Heart left ventricle (tissue), 16 donors: ENCODE measurements at regions of chr3 and their contacts with region 1.

Region 1: DNA sequence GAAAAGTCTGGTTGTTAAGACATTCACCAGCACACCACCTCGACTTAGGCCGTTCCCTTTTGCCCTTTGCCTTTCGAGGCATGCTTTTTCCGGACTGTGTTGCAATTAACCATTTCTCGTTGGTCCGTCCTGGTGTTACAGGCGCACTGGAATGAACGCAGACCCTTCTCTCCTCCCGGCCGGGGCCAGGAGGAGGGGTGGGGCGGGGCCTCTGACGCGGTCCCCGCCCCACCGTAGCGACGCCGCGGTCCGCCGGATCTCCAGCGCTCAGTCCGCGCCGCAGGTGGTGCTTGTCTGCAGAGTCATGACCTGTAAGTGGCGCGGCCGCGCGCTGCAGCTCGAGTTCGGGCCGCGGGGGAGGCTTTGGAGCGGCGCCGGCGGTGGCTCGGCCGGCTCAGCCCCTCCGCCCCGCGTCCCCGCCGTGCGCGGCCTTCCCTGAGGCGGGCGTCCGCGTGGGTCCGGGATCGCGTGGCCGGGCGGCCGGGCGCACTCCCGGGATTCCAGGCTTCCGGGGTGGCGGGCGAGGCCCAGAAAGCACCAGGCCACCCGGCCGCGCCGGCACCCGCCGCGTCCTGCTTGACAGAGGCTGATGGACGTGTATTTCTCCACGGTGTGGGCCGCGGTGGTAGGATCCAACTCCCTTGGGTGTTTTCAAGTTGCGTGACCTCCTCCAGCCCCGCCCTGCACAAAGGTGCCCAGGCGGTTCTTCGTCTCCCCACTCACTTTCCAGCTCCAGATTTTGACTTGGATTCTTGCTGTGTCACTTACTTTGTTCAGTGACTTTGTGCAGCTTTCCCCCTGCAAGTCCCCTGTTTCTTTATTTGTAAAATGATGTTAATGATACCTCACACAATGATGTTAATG is at the start of gene NIT2:
- DNase-seq: peak; percentile 87 to 93 (median 92)
- ATAC-seq: peak; percentile 80 to 98 (median 98)
- H3K4me3 ChIP-seq: peak within 1 kb of the TSS; percentile 57 to 80 (median 68)
- H3K27ac ChIP-seq: peak within 1 kb of the TSS; percentile 35 to 86 (median 82)
- H3K4me1 ChIP-seq: peaks cover 0 to 20% (median 8%) of the 10 kb centered on the region in 12 donors
- H3K27me3 ChIP-seq: no peaks in the 10 kb centered on the region
- CTCF ChIP-seq: peak in 1 of 12 donors; percentile 16
- POLR2A ChIP-seq: peak in 1 of 2 donors; percentile 72
- total RNA-seq, gene NIT2: 11.6 to 50.9 (median 43.9) TPM

Region 2: DNA sequence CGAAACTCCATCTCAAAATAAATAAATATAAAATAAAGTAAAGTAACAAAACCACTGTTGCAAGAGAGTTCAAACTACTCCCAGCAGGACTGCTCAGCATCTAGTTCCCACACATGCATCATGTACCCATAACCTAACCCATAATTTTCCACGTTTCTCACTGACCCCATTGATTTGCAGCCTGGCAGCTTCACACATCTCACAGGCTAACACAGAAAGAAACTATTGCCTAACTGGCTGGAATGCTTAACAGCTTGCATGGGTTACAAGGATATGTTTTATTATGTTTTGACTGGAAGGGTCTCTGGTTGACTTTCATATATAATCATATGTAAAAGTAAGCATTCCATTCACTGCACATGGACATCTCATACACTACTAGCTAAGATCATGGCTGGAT is 129.5 kb before region 1 on chr3:
- intact Hi-C with region 1: no loop called
- DNase-seq: no peak
- ATAC-seq: no peak
- H3K4me3 ChIP-seq: no peak overlapping the region
- H3K27ac ChIP-seq: no peak overlapping the region
- H3K4me1 ChIP-seq: peaks cover 0 to 8% (median 5%) of the 10 kb centered on the region in 12 donors
- H3K27me3 ChIP-seq: no peaks in the 10 kb centered on the region
- CTCF ChIP-seq: no peak
- POLR2A ChIP-seq: no peak

Region 3: DNA sequence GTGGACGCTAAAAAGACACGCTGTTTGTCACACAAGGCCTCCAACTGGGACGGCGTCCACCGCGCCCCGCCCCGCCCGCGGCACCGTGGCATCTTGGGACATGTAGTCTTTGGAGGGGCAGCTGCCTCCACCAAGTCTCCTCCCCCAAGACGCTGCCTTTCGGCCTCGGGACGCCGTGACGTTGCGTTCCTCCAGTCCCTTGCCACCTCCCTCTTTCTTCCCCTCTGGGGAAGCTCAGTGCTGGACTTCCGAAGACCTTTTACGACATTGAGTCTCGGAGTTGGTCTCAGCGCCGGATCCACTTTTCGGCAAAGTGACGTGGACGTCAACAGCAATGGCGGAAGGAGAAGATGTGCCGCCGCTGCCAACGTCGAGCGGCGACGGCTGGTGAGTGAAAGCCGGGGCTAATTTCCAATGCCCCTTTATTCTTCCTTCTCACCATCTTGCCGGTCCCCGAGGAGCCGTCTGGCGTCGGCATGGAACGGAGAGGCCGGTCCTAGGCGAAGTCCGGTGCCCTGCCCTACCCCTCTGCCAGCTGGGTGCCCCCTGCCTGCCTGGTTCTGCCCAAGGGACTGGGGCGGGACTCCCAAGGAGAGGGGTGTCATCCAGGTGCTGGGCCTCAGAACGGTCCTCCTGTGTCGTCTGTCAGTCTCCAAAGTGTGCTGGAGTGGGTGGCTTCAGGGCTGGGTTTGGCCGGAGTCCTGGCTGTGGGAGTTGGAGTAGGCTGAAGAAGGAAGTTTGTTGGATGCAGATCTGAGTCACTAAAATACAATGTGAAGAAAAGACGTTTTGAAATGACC is 73.8 kb before region 1 on chr3 and contains the start of gene TBC1D23:
- intact Hi-C with region 1: loop called in 1 of 10 experiments (anchors 2 kb)
- DNase-seq: peak; percentile 99
- ATAC-seq: peak; percentile 99
- H3K4me3 ChIP-seq: peak within 1 kb of the TSS; percentile 66 to 97 (median 88)
- H3K27ac ChIP-seq: peak within 1 kb of the TSS; percentile 84 to 98 (median 92)
- H3K4me1 ChIP-seq: peaks cover 0 to 67% (median 40%) of the 10 kb centered on the region in 12 donors
- H3K27me3 ChIP-seq: no peaks in the 10 kb centered on the region
- CTCF ChIP-seq: peak in 1 of 12 donors; percentile 29
- POLR2A ChIP-seq: peak; percentile 24 to 83
- total RNA-seq, gene TBC1D23: 17.7 to 38.3 (median 32.9) TPM

Region 4: GRCh38 chr3:100271522-100271921 is 63.2 kb before region 1 on chr3:
- intact Hi-C with region 1: no loop called
- DNase-seq: no peak
- ATAC-seq: no peak
- H3K4me3 ChIP-seq: no peak overlapping the region
- H3K27ac ChIP-seq: no peak overlapping the region
- H3K4me1 ChIP-seq: peaks cover 0 to 43% (median 28%) of the 10 kb centered on the region in 12 donors
- H3K27me3 ChIP-seq: no peaks in the 10 kb centered on the region
- CTCF ChIP-seq: no peak
- POLR2A ChIP-seq: no peak

Region 5: DNA sequence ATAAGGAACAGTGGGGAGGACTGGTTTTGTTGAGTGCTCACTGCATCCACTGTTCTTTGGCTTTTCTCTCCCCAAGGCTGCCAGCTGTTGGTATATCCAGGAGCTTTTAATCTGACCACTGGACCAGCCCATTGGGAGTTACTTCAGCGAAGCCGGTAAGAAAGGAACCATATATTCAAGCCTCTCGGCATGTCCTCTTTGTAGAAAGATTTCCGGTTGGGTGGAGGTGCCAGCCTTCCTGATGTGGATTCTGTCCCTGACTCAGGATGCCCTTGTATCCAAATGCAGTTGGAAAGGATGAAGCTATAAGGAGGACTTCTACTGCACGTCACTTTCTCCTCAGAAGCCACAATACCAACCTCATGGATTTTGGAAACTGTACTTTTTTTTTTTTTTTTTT is 14.0 kb after region 1 on chr3:
- intact Hi-C with region 1: no loop called
- DNase-seq: no peak
- ATAC-seq: no peak
- H3K4me3 ChIP-seq: no peak overlapping the region
- H3K27ac ChIP-seq: no peak overlapping the region
- H3K4me1 ChIP-seq: peaks cover 0 to 14% (median 0%) of the 10 kb centered on the region in 12 donors
- H3K27me3 ChIP-seq: no peaks in the 10 kb centered on the region
- CTCF ChIP-seq: no peak
- POLR2A ChIP-seq: no peak

Region 6: DNA sequence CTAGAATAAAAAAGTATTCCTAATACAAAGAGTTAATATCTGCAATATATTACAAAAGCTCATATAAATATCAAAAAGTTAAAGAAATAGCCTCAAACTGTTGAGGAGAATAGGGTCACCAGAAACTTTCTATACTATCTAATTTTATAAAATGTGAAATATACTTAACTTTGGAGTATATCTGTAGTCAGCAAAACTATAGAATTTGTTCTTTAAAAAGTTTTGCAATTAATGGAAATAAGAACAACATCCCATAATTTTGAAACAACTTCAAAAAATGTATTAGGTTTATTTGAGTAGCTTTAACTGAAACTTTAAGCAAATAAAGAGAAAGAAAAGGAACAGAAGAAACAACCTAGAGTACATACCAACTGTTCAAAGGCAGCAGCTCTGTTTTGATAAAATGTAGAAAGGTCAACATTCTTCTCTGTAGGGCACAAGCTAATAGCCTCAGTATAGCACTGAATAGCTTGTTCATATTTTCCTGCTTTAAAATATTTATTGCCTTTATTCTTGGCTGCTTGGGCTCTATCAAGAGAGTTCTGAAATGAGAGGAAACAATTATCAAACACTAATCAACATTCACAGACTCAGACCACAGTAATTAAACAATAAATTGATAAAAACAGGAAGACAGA is 51.8 kb after region 1 on chr3:
- intact Hi-C with region 1: loop called in 1 of 10 experiments (anchors 10 kb)
- DNase-seq: no peak
- ATAC-seq: peak; percentile 62 to 81 (median 74)
- H3K4me3 ChIP-seq: no peak overlapping the region
- H3K27ac ChIP-seq: peak overlapping the region in 10 of 12 donors; percentile 0 to 61 (median 38)
- H3K4me1 ChIP-seq: peaks cover 0 to 27% (median 7%) of the 10 kb centered on the region in 12 donors
- H3K27me3 ChIP-seq: no peaks in the 10 kb centered on the region
- CTCF ChIP-seq: no peak
- POLR2A ChIP-seq: no peak

Region 7: DNA sequence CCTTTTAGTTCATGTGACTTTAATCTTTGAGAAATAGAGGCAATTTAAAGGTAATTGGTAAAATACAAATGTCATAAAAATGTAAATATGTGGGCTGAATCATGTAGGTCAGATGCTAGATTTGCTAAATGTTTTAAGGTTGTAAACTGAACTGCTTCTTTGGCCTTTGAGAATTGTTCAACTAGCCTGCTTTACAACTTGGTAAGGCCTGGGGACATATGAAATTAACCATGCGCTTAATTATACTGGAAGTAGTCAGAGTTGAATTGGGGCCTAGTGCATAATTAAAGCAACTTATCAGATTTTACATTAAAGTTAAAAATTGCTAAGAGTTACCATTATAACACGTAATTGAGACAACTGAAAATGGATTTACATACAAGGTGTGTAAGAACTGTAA is 136.7 kb after region 1 on chr3:
- intact Hi-C with region 1: no loop called
- DNase-seq: no peak
- ATAC-seq: no peak
- H3K4me3 ChIP-seq: no peak overlapping the region
- H3K27ac ChIP-seq: no peak overlapping the region
- H3K4me1 ChIP-seq: peaks cover 0 to 1% (median 0%) of the 10 kb centered on the region in 12 donors
- H3K27me3 ChIP-seq: no peaks in the 10 kb centered on the region
- CTCF ChIP-seq: no peak
- POLR2A ChIP-seq: no peak